ENCODE measurements at regions of chr5 and their contacts with region 1.

Region 1: GRCh38 chr5:149434162-149435014 is 55.3 kb upstream of the IL17B start:
- DNase-seq: peak; percentile 77
- H3K4me3 Mint-ChIP-seq: no peak overlapping the region
- H3K27ac Mint-ChIP-seq: no peak overlapping the region
- H3K4me1 Mint-ChIP-seq: peaks cover 27% of the 10 kb centered on the region
- H3K27me3 Mint-ChIP-seq: no peaks in the 10 kb centered on the region
- CTCF ChIP-seq: peak; percentile 93

Region 2: DNA sequence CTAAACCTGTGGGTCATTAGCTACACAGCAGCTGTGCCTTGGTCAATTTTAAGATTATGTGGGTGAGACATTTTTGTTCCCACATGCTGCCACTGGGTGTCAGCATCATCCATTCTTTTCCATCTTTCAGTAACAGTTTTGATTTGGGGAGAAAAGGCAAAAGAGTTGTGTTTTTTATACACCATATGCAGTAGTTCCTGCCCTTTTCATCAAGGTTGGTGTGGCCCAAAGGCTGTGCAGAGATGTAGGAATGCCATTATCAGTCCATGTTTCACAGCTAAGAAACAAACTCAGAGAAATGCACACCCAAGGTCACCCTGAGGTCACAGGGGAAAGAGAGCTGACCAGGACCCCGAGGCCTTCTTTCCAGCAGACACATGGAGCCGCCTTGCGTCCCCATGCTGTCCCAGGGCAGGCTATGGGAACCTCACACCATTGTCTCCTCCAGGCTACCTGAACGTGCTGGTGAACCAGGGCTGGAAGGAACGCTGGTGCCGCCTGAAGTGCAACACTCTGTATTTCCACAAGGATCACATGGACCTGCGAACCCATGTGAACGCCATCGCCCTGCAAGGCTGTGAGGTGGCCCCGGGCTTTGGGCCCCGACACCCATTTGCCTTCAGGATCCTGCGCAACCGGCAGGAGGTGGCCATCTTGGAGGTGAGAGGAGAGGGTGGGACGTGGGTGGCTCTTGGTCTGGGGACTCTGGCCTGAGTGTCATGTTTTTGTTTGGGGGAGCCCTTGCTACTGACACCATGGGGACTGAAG is 116.9 kb before region 1 on chr5:
- CTCF ChIA-PET with region 1: no interaction called
- intact Hi-C with region 1: loop called (anchors 2 kb)
- DNase-seq: peak; percentile 44
- H3K4me3 Mint-ChIP-seq: no peak overlapping the region
- H3K27ac Mint-ChIP-seq: no peak overlapping the region
- H3K4me1 Mint-ChIP-seq: peaks cover 15% of the 10 kb centered on the region
- H3K27me3 Mint-ChIP-seq: no peaks in the 10 kb centered on the region
- CTCF ChIP-seq: peak; percentile 65

Region 3: DNA sequence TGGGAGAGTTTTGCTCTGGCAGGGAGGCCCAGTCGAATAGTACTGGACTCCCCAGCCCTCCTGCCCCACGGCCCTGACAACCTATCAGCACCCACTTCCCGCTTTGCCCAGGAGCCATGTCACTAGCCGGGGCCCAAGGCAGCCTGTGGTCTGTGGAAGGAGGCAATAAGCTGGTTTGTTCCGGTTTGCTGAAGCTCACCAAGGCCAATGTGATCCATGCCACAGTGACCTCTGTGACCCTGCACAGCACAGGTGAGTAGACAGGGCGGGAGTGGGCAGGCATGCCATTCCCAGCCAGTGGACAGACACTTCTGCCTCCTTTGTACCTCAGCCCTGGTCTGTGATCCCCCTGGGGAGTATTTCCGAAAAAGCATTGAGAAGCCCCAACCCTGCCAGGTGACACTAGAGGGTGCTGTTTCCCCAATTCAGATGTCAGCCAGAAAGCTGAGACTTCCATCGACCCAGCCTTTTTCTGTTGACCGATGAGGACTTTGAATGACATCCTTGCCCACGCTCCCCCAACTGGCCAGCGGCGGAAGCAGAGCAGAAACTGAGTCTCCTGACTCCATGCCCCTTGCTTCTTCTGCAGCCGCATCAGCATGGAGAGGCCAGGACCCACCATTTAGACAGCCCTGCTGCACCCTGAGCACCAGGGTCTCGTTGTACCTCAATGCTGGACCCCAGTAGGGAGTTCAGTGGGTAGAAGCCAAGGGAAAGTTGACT is 67.0 kb before region 1 on chr5:
- CTCF ChIA-PET with region 1: interaction called, 5 read pairs
- intact Hi-C with region 1: loop called (anchors 1 kb)
- DNase-seq: peak; percentile 89
- H3K4me3 Mint-ChIP-seq: no peak overlapping the region
- H3K27ac Mint-ChIP-seq: no peak overlapping the region
- H3K4me1 Mint-ChIP-seq: peaks cover 8% of the 10 kb centered on the region
- H3K27me3 Mint-ChIP-seq: no peaks in the 10 kb centered on the region
- CTCF ChIP-seq: peak; percentile 90

Region 4: DNA sequence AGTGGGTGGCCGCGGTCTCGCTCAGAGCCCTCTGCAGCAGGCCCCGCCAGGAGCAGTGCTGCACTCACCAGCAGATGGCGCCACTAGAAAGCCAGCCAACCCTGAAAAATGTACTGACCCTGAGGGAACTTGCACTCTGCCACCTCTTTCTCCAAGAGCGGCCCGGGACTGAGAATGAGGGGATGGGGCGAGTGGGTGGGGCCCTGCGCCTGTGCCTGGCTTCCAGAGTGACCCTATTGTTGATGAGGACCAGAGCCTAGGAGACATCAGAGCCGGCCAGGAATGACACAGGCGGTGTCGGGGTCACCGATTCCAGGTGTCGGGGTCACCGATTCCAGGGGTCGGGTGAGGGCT is 52.4 kb before region 1 on chr5:
- CTCF ChIA-PET with region 1: interaction called, 9 read pairs
- intact Hi-C with region 1: loop called (anchors 1 kb)
- DNase-seq: peak; percentile 88
- H3K4me3 Mint-ChIP-seq: no peak overlapping the region
- H3K27ac Mint-ChIP-seq: no peak overlapping the region
- H3K4me1 Mint-ChIP-seq: no peaks in the 10 kb centered on the region
- H3K27me3 Mint-ChIP-seq: peaks cover 39% of the 10 kb centered on the region
- CTCF ChIP-seq: peak; percentile 93

Measured in Calu3 (cell line).